ENCODE measurements at regions of chr2 and their contacts with region 1.

Region 1: DNA sequence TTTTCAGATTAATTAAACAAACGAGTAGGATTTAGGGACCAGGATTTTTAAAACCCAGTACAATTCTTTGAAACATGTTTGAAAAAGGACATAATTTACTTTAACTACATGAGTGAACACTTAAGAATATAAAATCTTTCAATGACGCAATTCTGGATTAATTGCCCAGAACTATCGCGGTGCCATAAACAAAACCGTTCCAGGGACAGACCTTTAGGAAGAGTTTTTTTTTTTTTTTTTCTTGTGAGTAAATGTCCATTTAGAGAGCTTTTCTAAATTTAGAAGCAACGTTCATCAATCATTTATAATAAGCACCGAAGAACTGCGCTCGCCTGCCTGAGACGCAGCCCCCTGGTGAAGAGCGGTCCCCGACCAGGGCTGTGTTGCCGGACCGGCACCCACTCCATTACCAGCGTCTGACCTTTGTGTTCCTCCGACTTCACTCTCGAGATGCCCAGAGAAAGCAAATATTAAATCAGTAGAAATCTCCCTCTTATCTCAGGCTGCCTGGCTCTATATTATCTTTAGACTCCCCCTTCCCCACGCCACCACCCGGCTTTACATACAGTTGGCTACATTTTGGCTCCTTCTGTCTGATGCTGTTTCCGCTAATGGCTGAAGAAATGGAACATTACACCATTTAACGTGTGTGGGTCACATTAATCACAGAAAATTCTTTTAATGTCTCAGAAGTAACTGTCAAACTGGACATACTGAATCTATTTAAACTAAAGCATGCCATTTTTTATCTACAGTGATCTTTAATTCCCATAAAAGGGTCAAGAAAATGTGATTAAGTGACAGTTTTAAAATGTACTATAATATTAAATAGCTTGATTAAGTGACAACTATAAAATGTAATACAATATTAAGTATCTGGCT is 364.0 kb upstream of the MEIS1 start:
- DNase-seq: no peak
- ATAC-seq: no peak
- H3K4me3 ChIP-seq: no peak overlapping the region
- H3K27ac ChIP-seq: no peak overlapping the region
- H3K4me1 ChIP-seq: no peaks in the 10 kb centered on the region
- H3K27me3 ChIP-seq: no peaks in the 10 kb centered on the region; the same call in none of the 2 replicates
- CTCF ChIP-seq: no peak

Region 2: DNA sequence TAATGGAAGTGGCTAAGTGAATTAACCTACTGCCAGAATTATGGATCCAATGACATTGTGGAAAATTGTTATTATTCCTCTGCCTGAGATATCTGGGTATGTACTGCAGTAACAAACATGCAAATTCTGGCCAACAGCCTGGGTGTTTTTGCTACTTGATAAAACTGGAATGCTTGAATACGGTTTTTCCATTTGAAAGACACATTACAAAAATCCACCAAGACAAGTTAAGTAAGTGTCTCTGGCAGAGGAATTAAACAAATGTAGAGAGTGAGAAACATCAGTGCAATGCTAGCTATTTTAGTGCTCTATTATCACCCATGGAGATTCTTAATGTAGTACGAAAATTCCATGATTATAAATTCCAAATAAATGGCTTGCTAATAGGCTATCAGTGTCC is 51.6 kb after region 1 on chr2:
- CTCF ChIA-PET with region 1: interaction called, 19 read pairs
- POLR2A ChIA-PET with region 1: no interaction called
- in situ Hi-C with region 1: no loop called
- intact Hi-C with region 1: no loop called
- DNase-seq: no peak
- ATAC-seq: no peak
- H3K4me3 ChIP-seq: no peak overlapping the region
- H3K27ac ChIP-seq: no peak overlapping the region
- H3K4me1 ChIP-seq: no peaks in the 10 kb centered on the region
- H3K27me3 ChIP-seq: no peaks in the 10 kb centered on the region
- CTCF ChIP-seq: no peak

Region 3: GRCh38 chr2:66334237-66335054 is 263.5 kb after region 1 on chr2:
- CTCF ChIA-PET with region 1: interaction called, 10 read pairs
- POLR2A ChIA-PET with region 1: no interaction called
- in situ Hi-C with region 1: no loop called
- intact Hi-C with region 1: no loop called
- DNase-seq: no peak
- ATAC-seq: no peak; the same call in 1 of the 2 replicates
- H3K4me3 ChIP-seq: no peak overlapping the region
- H3K27ac ChIP-seq: no peak overlapping the region
- H3K4me1 ChIP-seq: no peaks in the 10 kb centered on the region; the same call in 1 of the 2 replicates
- H3K27me3 ChIP-seq: no peaks in the 10 kb centered on the region; the same call in 1 of the 2 replicates
- CTCF ChIP-seq: no peak

Region 4: DNA sequence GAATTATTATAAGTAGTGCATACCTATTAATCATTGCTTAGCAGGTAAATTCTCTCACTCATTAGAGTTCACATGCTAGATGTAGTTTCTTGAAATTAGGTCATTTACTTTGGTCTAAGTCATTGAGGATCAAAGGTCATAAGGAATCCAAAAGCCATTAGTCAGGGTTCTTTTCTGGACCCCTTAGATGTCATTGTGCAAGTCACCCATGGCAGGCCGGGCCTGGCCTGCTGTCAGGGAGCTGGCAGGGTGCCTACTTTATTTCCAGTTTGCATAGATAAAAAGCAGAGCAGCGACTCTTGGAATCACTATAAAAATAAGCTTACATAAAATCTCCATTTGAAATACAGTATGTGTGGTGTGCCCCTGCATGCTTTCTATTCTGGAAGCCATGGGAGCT is 455.2 kb after region 1 on chr2:
- CTCF ChIA-PET with region 1: no interaction called
- POLR2A ChIA-PET with region 1: no interaction called
- in situ Hi-C with region 1: no loop called
- intact Hi-C with region 1: no loop called
- DNase-seq: no peak
- ATAC-seq: no peak
- H3K4me3 ChIP-seq: no peak overlapping the region
- H3K27ac ChIP-seq: no peak overlapping the region
- H3K4me1 ChIP-seq: no peaks in the 10 kb centered on the region
- H3K27me3 ChIP-seq: no peaks in the 10 kb centered on the region
- CTCF ChIP-seq: no peak